A673 (cell line): ENCODE measurements at regions of chr3 and their contacts with region 1.

Region 1: DNA sequence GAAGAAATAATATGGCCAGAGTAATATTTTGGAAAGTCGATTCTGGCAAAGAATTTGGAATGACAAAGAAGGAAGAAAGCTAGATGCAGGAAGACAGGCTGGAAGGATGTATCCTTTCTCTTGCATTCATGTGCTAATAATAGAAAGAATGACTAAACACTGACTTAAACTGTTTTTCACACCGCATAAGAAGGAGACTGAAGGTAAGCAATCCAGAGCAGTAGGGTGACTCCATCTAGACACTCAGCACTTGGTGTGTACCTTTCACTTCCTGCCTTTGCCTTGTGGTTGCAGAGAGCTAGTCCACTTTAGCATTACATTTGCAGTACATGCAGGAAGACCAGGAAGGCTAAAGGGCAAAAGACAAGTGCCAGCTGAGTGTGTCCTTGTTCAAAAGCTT is 234.6 kb downstream of the RBMS3 start:
- DNase-seq: no peak
- H3K4me3 ChIP-seq: no peak overlapping the region
- H3K27ac ChIP-seq: no peak overlapping the region
- H3K4me1 ChIP-seq: peaks cover 34% of the 10 kb centered on the region
- H3K27me3 ChIP-seq: no peaks in the 10 kb centered on the region
- CTCF ChIP-seq: no peak

Region 2: DNA sequence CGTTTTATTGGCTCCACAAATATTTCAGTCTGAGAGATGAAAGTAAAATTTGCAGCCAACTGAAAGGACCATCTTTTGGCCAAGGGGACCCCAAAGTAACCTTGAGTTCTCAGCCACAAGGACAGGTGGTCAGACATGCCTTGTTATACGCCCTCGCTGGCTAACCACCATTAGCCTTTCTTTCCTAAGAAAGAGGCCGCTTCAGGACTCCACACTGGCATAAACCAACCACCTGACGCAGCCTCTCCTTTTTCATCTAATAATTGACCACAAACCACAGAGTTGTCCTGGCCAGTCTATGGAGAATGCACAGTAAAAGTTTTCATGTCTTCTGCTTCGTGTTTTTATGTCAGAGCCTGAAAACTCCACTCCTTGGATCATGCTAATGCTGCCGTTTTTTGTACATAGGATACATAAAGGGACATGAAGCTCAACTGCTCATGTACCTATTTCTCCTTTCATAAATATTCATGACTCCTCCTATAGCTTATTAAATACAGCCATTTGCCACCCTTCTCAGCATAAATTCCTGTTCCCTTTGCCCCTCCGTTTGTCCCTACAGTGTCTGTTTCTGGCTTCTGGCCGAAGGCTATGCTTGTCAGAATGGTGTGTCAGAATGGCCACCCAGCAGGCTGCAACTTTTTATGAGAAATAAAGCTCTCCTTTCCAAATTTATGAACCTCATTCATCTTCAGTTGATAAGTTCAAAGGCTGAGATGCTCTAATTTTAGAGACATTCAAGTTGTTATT is 608.7 kb before region 1 on chr3:
- CTCF ChIA-PET with region 1: no interaction called
- POLR2A ChIA-PET with region 1: interaction called, 12 read pairs
- intact Hi-C with region 1: no loop called
- DNase-seq: no peak
- H3K4me3 ChIP-seq: no peak overlapping the region
- H3K27ac ChIP-seq: no peak overlapping the region
- H3K4me1 ChIP-seq: no peaks in the 10 kb centered on the region
- H3K27me3 ChIP-seq: no peaks in the 10 kb centered on the region
- CTCF ChIP-seq: no peak

Region 3: GRCh38 chr3:29346828-29347227 is 168.6 kb before region 1 on chr3:
- CTCF ChIA-PET with region 1: no interaction called
- POLR2A ChIA-PET with region 1: no interaction called
- intact Hi-C with region 1: loop called (anchors 10 kb)
- DNase-seq: peak; percentile 50
- H3K4me3 ChIP-seq: no peak overlapping the region
- H3K27ac ChIP-seq: no peak overlapping the region
- H3K4me1 ChIP-seq: peaks cover 32% of the 10 kb centered on the region
- H3K27me3 ChIP-seq: peaks cover 20% of the 10 kb centered on the region
- CTCF ChIP-seq: no peak